GM12878 (cell line): ENCODE measurements at regions of chr4 and their contacts with region 1.

Region 1: GRCh38 chr4:82798168-82799005 is at the start of gene SCD5:
- DNase-seq: no peak
- ATAC-seq: peak; percentile 96
- H3K4me3 ChIP-seq: peak within 1 kb of the TSS; percentile 84
- H3K27ac ChIP-seq: no peak within 1 kb of the TSS; the same call in 1 of the 2 replicates
- H3K4me1 ChIP-seq: peaks cover 9% of the 10 kb centered on the region
- H3K27me3 ChIP-seq: no peaks in the 10 kb centered on the region
- CTCF ChIP-seq: no peak
- EP300 ChIP-seq: no peak
- POLR2A ChIP-seq: peak; percentile 64
- RAD21 ChIP-seq: no peak
- polyA plus RNA-seq, gene SCD5: 2.4 to 3.5 TPM

Region 2: DNA sequence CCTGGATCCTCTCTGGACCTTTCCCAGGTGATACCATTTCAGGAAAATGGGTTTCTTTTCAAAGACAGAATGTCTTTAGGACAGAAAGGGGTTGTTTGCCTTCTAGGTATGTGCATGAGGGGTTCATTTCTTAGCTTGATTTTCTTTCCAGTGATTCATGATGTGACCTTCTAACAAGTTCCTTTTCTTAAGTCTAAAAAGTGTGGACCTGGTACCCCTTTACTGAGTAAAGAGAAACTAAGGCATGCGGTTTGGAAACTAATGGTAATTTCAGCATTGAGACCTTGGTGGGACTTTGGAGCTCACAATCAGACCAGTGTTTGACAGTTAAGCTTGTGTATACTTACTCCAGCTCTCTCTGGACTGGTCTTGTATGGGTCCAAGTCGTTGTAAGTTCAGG is 359.3 kb before region 1 on chr4:
- CTCF ChIA-PET with region 1: no interaction called
- POLR2A ChIA-PET with region 1: no interaction called
- RAD21 ChIA-PET with region 1: no interaction called
- SMC1A ChIA-PET with region 1: no interaction called
- in situ Hi-C with region 1: no loop called
- intact Hi-C with region 1: no loop called
- DNase-seq: no peak
- ATAC-seq: peak; percentile 28
- H3K4me3 ChIP-seq: no peak overlapping the region
- H3K27ac ChIP-seq: no peak overlapping the region
- H3K4me1 ChIP-seq: no peaks in the 10 kb centered on the region
- H3K27me3 ChIP-seq: no peaks in the 10 kb centered on the region
- CTCF ChIP-seq: no peak
- EP300 ChIP-seq: no peak
- POLR2A ChIP-seq: no peak
- RAD21 ChIP-seq: no peak

Region 3: GRCh38 chr4:82785611-82786400 is 12.6 kb before region 1 on chr4:
- CTCF ChIA-PET with region 1: interaction called, 4 read pairs
- POLR2A ChIA-PET with region 1: interaction called, 3 read pairs
- RAD21 ChIA-PET with region 1: interaction called, 7 read pairs
- SMC1A ChIA-PET with region 1: interaction called, 13 read pairs
- in situ Hi-C with region 1: no loop called
- intact Hi-C with region 1: no loop called
- DNase-seq: no peak
- ATAC-seq: no peak
- H3K4me3 ChIP-seq: no peak overlapping the region
- H3K27ac ChIP-seq: no peak overlapping the region
- H3K4me1 ChIP-seq: peaks cover 5% of the 10 kb centered on the region
- H3K27me3 ChIP-seq: no peaks in the 10 kb centered on the region
- CTCF ChIP-seq: no peak
- EP300 ChIP-seq: no peak
- POLR2A ChIP-seq: no peak
- RAD21 ChIP-seq: no peak